K562 (cell line): ENCODE measurements at regions of chr1 and their contacts with region 1.

Region 1: GRCh38 chr1:204806943-204807687 is 63.5 kb upstream of the NFASC start:
- DNase-seq: peak; percentile 92 to 97 (median 96)
- ATAC-seq: peak; percentile 99
- H3K4me3 ChIP-seq: peak overlapping the region; percentile 46
- H3K27ac ChIP-seq: no peak overlapping the region
- H3K4me1 ChIP-seq: peaks cover 2 to 6% of the 10 kb centered on the region in 2 experiments; a peak in 3 of 5 replicates
- H3K27me3 ChIP-seq: peaks cover 0 to 13% of the 10 kb centered on the region in 2 experiments; a peak in 2 of 5 replicates
- CTCF ChIP-seq: peak; percentile 98 to 100 (median 98)
- EP300 ChIP-seq: no peak
- POLR2A ChIP-seq: no peak
- RAD21 ChIP-seq: peak; percentile 96 to 98

Region 2: GRCh38 chr1:204162231-204163074 is 644.7 kb before region 1 on chr1:
- CTCF ChIA-PET with region 1: interaction called, 27 read pairs
- POLR2A ChIA-PET with region 1: no interaction called
- in situ Hi-C with region 1: no loop called
- intact Hi-C with region 1: loop called (anchors 5 kb)
- DNase-seq: peak; percentile 76 to 94 (median 90)
- ATAC-seq: peak; percentile 98
- H3K4me3 ChIP-seq: no peak overlapping the region
- H3K27ac ChIP-seq: no peak overlapping the region
- H3K4me1 ChIP-seq: no peaks in the 10 kb centered on the region
- H3K27me3 ChIP-seq: peaks cover 3 to 43% of the 10 kb centered on the region in 2 experiments; a peak in 4 of 5 replicates
- CTCF ChIP-seq: peak; percentile 96 to 99 (median 98)
- EP300 ChIP-seq: no peak
- POLR2A ChIP-seq: no peak
- RAD21 ChIP-seq: peak; percentile 99 to 100

Region 3: GRCh38 chr1:204431310-204432165 is 375.6 kb before region 1 on chr1:
- CTCF ChIA-PET with region 1: interaction called, 8 read pairs
- POLR2A ChIA-PET with region 1: no interaction called
- in situ Hi-C with region 1: loop called (anchors 10 kb)
- intact Hi-C with region 1: loop called (anchors 1 kb)
- DNase-seq: peak; percentile 81 to 89 (median 88)
- ATAC-seq: peak; percentile 98
- H3K4me3 ChIP-seq: no peak overlapping the region
- H3K27ac ChIP-seq: no peak overlapping the region
- H3K4me1 ChIP-seq: peaks cover 0 to 4% of the 10 kb centered on the region in 2 experiments; a peak in 3 of 5 replicates
- H3K27me3 ChIP-seq: peaks cover 23 to 50% of the 10 kb centered on the region in 2 experiments
- CTCF ChIP-seq: peak; percentile 86 to 97 (median 91)
- EP300 ChIP-seq: no peak
- POLR2A ChIP-seq: no peak
- RAD21 ChIP-seq: peak; percentile 73 to 80

Region 4: DNA sequence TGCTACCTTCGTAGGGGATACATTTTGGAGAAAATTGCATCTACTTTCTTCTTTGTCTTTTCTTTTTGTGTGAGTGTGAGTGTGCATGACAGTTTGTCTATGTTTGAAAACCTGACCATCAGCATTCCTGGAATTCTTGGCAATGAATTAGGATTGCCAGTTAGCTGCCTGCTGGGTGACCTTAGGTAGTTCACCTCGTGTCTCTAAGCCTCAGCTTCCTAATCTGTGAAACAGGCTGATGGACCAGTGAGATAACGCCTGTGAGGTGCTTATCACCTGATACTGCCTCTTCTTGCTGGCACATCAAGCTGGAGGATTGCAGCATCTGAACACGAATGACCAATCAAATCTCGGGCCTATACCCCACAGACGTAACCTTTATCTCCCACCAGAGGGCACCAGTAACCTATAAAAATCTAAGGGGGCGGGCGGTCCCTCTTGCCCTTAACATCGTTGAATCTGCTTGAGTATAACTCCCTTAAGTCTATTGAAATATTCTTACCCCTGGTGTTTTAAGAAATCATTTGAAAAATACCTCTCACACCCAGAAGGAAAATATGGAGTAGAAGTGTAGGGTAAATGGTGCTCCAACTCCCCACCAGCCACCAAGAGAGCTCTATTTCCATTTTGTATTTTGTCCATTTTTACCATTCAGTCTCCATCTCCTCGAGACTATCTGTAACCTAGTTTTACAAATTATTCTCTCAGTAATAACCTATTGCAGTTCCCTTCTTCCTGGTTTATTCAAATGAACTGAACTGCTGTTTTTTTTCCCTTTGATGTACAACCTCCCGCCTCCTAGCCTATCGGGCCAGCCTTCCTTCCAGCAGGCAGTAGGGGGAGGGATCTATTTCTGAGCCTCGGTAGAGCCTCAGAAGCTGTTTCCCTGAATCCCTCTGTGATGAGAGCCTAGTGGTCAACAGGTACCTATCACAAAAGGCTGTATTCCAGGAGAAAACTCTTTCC is 241.2 kb before region 1 on chr1:
- CTCF ChIA-PET with region 1: interaction called, 159 read pairs
- POLR2A ChIA-PET with region 1: interaction called, 13 read pairs
- in situ Hi-C with region 1: loop called (anchors 5 kb)
- intact Hi-C with region 1: loop called (anchors 1 kb)
- DNase-seq: peak; percentile 84 to 92 (median 90)
- ATAC-seq: peak; percentile 92
- H3K4me3 ChIP-seq: no peak overlapping the region
- H3K27ac ChIP-seq: peak overlapping the region; percentile 4; the same call in 1 of the 3 replicates
- H3K4me1 ChIP-seq: peaks cover 12 to 16% of the 10 kb centered on the region in 2 experiments; a peak in 4 of 5 replicates
- H3K27me3 ChIP-seq: no peaks in the 10 kb centered on the region
- CTCF ChIP-seq: peak; percentile 81 to 91 (median 90)
- EP300 ChIP-seq: peak; percentile 95
- POLR2A ChIP-seq: no peak
- RAD21 ChIP-seq: peak; percentile 94 to 98

Region 5: GRCh38 chr1:204941421-204942338 is 134.6 kb after region 1 on chr1:
- CTCF ChIA-PET with region 1: interaction called, 26 read pairs
- POLR2A ChIA-PET with region 1: interaction called, 3 read pairs
- in situ Hi-C with region 1: no loop called
- intact Hi-C with region 1: loop called (anchors 1 kb)
- DNase-seq: peak; percentile 73 to 77 (median 75)
- ATAC-seq: peak; percentile 93
- H3K4me3 ChIP-seq: no peak overlapping the region
- H3K27ac ChIP-seq: no peak overlapping the region
- H3K4me1 ChIP-seq: no peaks in the 10 kb centered on the region
- H3K27me3 ChIP-seq: peaks cover 10 to 45% of the 10 kb centered on the region in 2 experiments; a peak in 3 of 5 replicates
- CTCF ChIP-seq: peak; percentile 90 to 97 (median 96)
- EP300 ChIP-seq: no peak
- POLR2A ChIP-seq: no peak
- RAD21 ChIP-seq: peak; percentile 79 to 87

Region 6: DNA sequence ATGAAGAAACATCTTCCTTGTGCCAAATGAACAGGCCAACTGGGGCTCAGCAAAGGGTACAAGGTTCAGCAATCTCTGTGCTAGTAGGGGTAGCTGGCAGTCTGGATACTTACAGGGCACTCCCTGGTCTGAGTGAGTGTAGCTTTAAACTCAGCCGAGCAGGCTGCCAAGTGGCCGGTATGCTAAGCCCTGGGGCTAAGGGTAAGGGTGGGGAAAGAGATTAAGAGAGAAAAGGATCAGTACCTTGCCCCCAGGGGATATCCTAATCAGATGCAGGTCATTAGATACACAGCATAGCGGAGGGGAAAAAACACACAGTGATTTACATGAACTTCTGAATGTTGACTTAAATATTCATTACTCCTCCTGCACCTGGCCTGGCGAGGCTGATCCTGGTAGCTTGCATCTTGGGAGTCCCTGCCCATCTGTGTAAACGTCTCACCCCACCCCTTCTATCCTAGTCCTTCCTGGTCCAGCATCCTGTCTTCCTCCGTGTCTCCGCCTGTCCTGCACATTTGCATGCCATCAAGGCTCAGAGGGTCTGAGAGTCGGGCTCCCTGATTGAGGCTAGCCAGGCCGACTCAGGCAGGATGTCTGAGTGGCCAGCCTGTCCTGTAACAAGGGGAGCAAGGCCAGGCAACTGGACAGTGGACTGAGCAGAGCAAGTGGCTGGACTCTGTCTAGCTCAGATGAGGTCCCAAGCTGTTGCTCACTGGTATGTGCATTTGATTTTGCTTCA is 196.4 kb after region 1 on chr1:
- CTCF ChIA-PET with region 1: no interaction called
- POLR2A ChIA-PET with region 1: no interaction called
- in situ Hi-C with region 1: no loop called
- intact Hi-C with region 1: no loop called
- DNase-seq: no peak
- ATAC-seq: no peak
- H3K4me3 ChIP-seq: no peak overlapping the region
- H3K27ac ChIP-seq: no peak overlapping the region
- H3K4me1 ChIP-seq: no peaks in the 10 kb centered on the region
- H3K27me3 ChIP-seq: peaks cover 67 to 91% of the 10 kb centered on the region in 2 experiments
- CTCF ChIP-seq: no peak
- EP300 ChIP-seq: no peak
- POLR2A ChIP-seq: no peak
- RAD21 ChIP-seq: no peak

Region 7: DNA sequence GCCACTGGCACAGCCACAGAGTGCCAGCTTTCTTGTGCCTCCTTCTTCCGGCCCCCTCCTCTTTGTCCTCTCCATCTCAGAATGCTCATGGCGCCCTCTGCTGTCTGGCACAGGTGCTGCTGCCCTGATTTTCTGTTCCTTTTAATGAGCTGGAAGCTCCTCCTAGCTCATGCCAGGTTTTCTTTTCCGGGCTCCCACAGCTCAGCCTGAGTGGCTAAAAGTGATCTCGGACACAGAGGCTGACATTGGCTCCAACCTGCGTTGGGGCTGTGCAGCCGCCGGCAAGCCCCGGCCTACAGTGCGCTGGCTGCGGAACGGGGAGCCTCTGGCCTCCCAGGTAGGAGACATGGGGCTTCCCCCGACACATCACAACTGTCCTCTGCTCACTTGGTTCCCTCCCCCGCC is 254.6 kb after region 1 on chr1:
- CTCF ChIA-PET with region 1: interaction called, 9 read pairs
- POLR2A ChIA-PET with region 1: no interaction called
- in situ Hi-C with region 1: no loop called
- intact Hi-C with region 1: loop called (anchors 10 kb)
- DNase-seq: peak; percentile 80 to 85 (median 82)
- ATAC-seq: peak; percentile 85
- H3K4me3 ChIP-seq: no peak overlapping the region
- H3K27ac ChIP-seq: no peak overlapping the region
- H3K4me1 ChIP-seq: peaks cover 0 to 23% of the 10 kb centered on the region in 2 experiments; a peak in 3 of 5 replicates
- H3K27me3 ChIP-seq: peaks cover 39 to 75% of the 10 kb centered on the region in 2 experiments
- CTCF ChIP-seq: peak; percentile 92 to 98 (median 95)
- EP300 ChIP-seq: no peak
- POLR2A ChIP-seq: no peak
- RAD21 ChIP-seq: peak; percentile 82 to 95

Region 8: DNA sequence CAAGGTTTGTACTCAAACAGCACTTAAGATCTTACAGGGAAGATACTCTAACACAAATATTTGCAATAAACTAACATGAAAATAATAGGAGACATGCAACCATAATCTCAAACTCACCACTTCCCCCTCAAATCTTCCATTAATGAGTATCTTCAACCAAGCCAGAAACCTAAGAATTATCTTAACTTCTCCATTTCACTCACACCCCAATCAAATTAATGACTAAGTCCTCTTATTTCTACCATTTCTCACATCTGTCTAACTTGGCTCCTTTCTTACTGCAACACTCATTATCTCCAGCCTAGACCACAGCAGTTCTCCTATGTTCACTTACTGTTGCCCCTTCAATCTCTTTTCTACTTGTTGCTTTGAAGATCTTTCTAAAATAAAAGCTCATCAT is 304.2 kb after region 1 on chr1:
- CTCF ChIA-PET with region 1: no interaction called
- POLR2A ChIA-PET with region 1: no interaction called
- in situ Hi-C with region 1: no loop called
- intact Hi-C with region 1: no loop called
- DNase-seq: no peak
- ATAC-seq: no peak
- H3K4me3 ChIP-seq: no peak overlapping the region
- H3K27ac ChIP-seq: no peak overlapping the region
- H3K4me1 ChIP-seq: no peaks in the 10 kb centered on the region
- H3K27me3 ChIP-seq: no peaks in the 10 kb centered on the region
- CTCF ChIP-seq: no peak
- EP300 ChIP-seq: no peak
- POLR2A ChIP-seq: no peak
- RAD21 ChIP-seq: no peak